Activated CD8-positive, alpha-beta T cell treated with anti-CD3 and anti-CD28 coated beads for 36 hours (primary cell): ENCODE measurements at regions of chr12 and their contacts with region 1.

Region 1: GRCh38 chr12:67457778-67458177 is 188.6 kb downstream of the CAND1 start:
- DNase-seq: no peak
- ATAC-seq: no peak
- H3K4me3 Mint-ChIP-seq: no peak overlapping the region
- H3K27ac Mint-ChIP-seq: no peak overlapping the region
- H3K4me1 Mint-ChIP-seq: peaks cover 11% of the 10 kb centered on the region
- H3K27me3 Mint-ChIP-seq: peaks cover 13% of the 10 kb centered on the region
- CTCF ChIP-seq: peak; percentile 47

Region 2: DNA sequence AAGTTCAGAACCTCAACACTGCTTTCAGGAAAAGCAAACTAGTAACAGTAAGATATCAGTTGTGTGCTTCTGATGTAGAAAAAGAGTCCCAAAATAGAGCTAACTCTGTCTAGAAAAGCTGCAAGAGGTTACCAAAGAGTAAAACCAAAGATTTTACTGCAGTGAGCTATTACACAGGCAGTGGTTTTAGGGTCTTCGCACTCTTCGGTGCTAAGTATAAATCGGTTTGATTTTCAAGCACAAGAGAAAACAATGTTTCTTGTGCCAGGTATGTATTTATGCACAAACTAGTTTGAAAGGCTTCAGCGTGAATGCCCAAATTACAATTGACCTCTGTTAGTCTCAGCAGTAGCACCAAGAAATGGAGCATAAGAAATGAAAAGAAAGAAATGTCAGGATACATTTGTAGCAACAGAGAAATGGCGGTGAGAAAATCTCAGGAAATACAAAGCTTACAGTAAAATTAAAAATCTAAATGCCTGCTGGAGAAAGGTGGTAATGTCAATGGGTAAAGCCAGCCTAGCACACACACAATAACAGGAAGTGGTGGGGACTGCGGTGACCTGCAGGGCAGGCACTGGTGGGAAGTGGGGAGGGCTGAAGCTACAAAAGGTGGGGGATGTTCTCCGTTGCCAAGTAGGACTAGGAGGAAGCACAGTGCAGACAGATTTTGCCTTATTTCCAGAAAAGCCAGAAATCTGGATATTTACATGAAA is 172.8 kb after region 1 on chr12:
- CTCF ChIA-PET with region 1: interaction called, 3 read pairs
- POLR2A ChIA-PET with region 1: no interaction called
- intact Hi-C with region 1: loop called (anchors 10 kb)
- DNase-seq: peak; percentile 92
- ATAC-seq: peak; percentile 96
- H3K4me3 Mint-ChIP-seq: peak overlapping the region; percentile 47
- H3K27ac Mint-ChIP-seq: peak overlapping the region; percentile 88
- H3K4me1 Mint-ChIP-seq: peaks cover 79% of the 10 kb centered on the region
- H3K27me3 Mint-ChIP-seq: no peaks in the 10 kb centered on the region
- CTCF ChIP-seq: peak; percentile 60

Region 3: DNA sequence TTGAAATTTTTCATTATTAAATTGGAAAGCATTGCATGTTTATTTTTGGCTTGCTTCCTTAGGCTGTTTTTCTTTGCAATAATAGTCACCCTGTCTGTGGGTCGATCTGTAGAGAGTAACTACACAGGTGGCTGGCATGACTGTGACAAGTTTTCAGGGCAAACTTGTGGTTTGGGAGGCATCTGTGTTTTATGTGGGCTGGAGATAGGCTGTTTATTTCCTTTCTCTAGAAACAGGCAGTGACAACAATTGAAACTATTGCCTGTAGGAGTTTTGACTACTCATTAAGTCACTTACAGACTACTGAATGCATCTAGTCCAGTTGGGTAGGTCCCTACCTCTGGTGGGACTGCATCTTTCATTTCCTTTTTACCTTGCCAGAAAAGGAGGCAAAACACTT is 346.4 kb after region 1 on chr12:
- CTCF ChIA-PET with region 1: no interaction called
- POLR2A ChIA-PET with region 1: no interaction called
- intact Hi-C with region 1: loop called (anchors 10 kb)
- DNase-seq: peak; percentile 75
- ATAC-seq: peak; percentile 94
- H3K4me3 Mint-ChIP-seq: no peak overlapping the region
- H3K27ac Mint-ChIP-seq: no peak overlapping the region
- H3K4me1 Mint-ChIP-seq: peaks cover 31% of the 10 kb centered on the region
- H3K27me3 Mint-ChIP-seq: no peaks in the 10 kb centered on the region
- CTCF ChIP-seq: no peak